Activated T-helper 1 cell treated with anti-CD3 and anti-CD28 coated beads, Interleukin-12 subunit alpha, Interleukin-12 subunit beta, Interleukin-2, Interleukin-4 antibody, amounts not matched to agents 30 ng/mL and 10 ng/mL and 1 ng/mL, durations not matched to agents 14 hours and 24 hours and 36 hours (primary cell): ENCODE measurements at regions of chr22 and their contacts with region 1.

Region 1: GRCh38 chr22:36387752-36388518 is at the start of gene MYH9:
- DNase-seq: peak; percentile 100
- H3K4me3 Mint-ChIP-seq: peak within 1 kb of the TSS; percentile 100
- H3K27ac Mint-ChIP-seq: peak within 1 kb of the TSS; percentile 99
- H3K4me1 Mint-ChIP-seq: peaks cover 44% of the 10 kb centered on the region
- H3K27me3 Mint-ChIP-seq: no peaks in the 10 kb centered on the region
- total RNA-seq, gene MYH9: 618 and 639 TPM in 2 replicates

Region 2: GRCh38 chr22:36239401-36240171 is 148.3 kb before region 1 on chr22 and contains the start of gene APOL2:
- intact Hi-C with region 1: loop called (anchors 5 kb)
- DNase-seq: peak; percentile 84
- H3K4me3 Mint-ChIP-seq: peak within 1 kb of the TSS; percentile 99
- H3K27ac Mint-ChIP-seq: peak within 1 kb of the TSS; percentile 97
- H3K4me1 Mint-ChIP-seq: peaks cover 54% of the 10 kb centered on the region
- H3K27me3 Mint-ChIP-seq: no peaks in the 10 kb centered on the region
- total RNA-seq, gene APOL2: 54.4 and 62.2 TPM in 2 replicates

Region 3: DNA sequence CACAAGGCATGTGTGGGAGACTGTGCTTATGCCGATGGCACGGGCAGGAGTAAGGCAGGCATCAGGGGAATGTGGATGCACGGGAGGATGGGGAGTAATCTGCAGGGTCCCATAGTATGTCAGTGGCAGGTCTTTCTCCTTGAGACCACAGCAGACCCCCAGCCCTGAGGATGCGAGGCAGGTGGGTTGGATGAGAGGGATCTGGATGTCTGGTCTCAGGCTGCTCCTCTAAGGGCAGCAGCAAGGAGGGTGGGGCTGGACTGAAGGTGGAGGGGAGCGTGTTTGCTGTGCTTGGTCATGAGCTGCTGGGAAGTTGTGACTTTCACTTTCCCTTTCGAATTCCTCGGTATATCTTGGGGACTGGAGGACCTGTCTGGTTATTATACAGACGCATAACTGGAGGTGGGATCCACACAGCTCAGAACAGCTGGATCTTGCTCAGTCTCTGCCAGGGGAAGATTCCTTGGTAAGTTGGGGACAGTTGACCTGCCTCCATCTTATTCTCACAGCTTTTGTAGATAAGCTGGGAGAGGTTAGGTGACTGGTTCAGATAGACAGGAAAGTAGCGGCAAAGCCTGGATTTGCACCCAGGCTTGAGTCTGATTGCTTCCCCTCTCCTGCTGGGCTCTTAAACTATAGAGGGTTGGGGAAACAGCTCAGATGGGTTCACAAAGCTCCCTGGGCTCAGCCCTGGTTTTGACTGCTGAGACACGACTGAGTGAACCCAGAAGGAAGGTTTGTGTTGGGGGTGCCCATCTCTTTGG is 135.0 kb before region 1 on chr22 and contains the start of gene APOL1:
- intact Hi-C with region 1: no loop called
- DNase-seq: peak; percentile 64
- H3K4me3 Mint-ChIP-seq: peak within 1 kb of the TSS; percentile 93
- H3K27ac Mint-ChIP-seq: peak within 1 kb of the TSS; percentile 83
- H3K4me1 Mint-ChIP-seq: peaks cover 60% of the 10 kb centered on the region
- H3K27me3 Mint-ChIP-seq: no peaks in the 10 kb centered on the region
- total RNA-seq, gene APOL1: 36.7 and 37.1 TPM in 2 replicates

Region 4: GRCh38 chr22:36331306-36331911 is 56.5 kb before region 1 on chr22:
- intact Hi-C with region 1: loop called (anchors 1 kb)
- DNase-seq: peak; percentile 77
- H3K4me3 Mint-ChIP-seq: peak overlapping the region; percentile 86
- H3K27ac Mint-ChIP-seq: peak overlapping the region; percentile 98
- H3K4me1 Mint-ChIP-seq: peaks cover 99% of the 10 kb centered on the region
- H3K27me3 Mint-ChIP-seq: no peaks in the 10 kb centered on the region

Region 5: DNA sequence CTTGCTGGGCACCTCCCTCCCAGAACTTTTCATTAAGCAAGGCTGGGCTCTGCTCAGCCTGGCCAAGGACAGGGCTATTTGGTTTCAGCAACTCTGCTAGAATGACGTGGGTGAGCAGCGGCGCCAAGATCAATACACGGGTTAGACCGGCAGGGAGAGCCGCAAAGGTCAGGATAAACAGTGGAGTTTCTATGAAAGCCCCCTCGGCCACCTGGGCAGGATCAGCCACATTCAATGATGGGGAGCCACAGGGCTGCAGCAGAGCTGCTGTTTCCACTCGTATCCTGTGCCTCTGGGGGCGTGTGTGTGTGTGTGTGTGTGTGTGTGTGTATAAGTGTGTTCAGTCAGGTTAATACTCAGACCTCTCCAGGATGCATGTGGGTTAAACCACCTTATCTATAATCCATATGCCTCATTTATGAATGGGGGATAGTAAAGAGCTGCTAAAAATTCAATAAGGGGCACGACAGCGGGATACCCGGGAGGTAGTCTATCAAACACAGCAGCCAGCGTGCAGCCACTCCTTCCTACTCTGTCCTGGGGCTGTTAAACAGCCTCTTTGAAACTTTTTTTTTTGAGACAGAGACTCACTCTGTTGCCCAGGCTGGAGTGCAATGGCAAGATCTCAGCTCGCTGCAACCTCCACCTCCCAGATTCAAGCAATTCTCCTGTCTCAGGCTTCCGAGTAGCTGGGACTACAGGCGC is 35.0 kb before region 1 on chr22:
- intact Hi-C with region 1: loop called (anchors 1 kb)
- DNase-seq: no peak
- H3K4me3 Mint-ChIP-seq: no peak overlapping the region
- H3K27ac Mint-ChIP-seq: peak overlapping the region; percentile 86
- H3K4me1 Mint-ChIP-seq: peaks cover 85% of the 10 kb centered on the region
- H3K27me3 Mint-ChIP-seq: no peaks in the 10 kb centered on the region

Region 6: DNA sequence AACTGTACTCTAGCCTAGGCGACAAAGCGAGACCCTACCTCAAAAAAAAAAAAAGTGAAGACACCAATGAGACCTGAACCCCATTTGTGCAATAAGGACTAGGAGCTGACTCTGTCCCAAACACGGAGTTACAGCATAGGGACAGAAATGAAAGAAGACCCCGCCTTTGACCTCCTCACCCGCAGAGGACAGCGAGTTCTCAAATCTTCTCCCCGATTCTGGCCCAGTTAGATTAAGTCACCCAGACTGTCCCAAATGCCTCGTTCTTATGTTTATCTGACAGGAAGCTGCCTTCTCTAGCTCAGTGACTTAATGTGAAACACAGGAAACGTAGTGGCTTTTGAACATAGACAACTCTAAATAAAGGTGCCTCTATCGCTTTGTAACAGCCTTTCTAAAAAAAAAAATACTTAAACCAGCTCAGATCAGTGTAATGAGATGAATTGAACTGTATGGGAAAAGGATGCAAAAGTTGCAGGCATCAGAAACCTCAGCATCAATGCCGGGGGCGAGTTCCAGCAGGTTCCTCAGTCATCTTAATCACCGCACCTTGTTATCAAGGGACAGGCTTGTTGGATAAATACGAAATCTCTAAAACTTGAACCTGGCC is 10.8 kb before region 1 on chr22:
- intact Hi-C with region 1: loop called (anchors 1 kb)
- DNase-seq: peak; percentile 52
- H3K4me3 Mint-ChIP-seq: peak overlapping the region; percentile 87
- H3K27ac Mint-ChIP-seq: peak overlapping the region; percentile 99
- H3K4me1 Mint-ChIP-seq: peaks cover 91% of the 10 kb centered on the region
- H3K27me3 Mint-ChIP-seq: no peaks in the 10 kb centered on the region

Region 7: GRCh38 chr22:36439481-36440271 is 51.7 kb after region 1 on chr22:
- intact Hi-C with region 1: loop called (anchors 5 kb)
- DNase-seq: no peak
- H3K4me3 Mint-ChIP-seq: no peak overlapping the region
- H3K27ac Mint-ChIP-seq: no peak overlapping the region
- H3K4me1 Mint-ChIP-seq: peaks cover 44% of the 10 kb centered on the region
- H3K27me3 Mint-ChIP-seq: no peaks in the 10 kb centered on the region

Region 8: GRCh38 chr22:36481393-36482168 is 93.6 kb after region 1 on chr22 and contains the start of gene TXN2:
- intact Hi-C with region 1: loop called (anchors 1 kb)
- DNase-seq: peak; percentile 91
- H3K4me3 Mint-ChIP-seq: peak within 1 kb of the TSS; percentile 97
- H3K27ac Mint-ChIP-seq: peak within 1 kb of the TSS; percentile 92
- H3K4me1 Mint-ChIP-seq: peaks cover 12% of the 10 kb centered on the region
- H3K27me3 Mint-ChIP-seq: peaks cover 1% of the 10 kb centered on the region
- total RNA-seq, gene TXN2: 95.2 and 95.3 TPM in 2 replicates

Region 9: DNA sequence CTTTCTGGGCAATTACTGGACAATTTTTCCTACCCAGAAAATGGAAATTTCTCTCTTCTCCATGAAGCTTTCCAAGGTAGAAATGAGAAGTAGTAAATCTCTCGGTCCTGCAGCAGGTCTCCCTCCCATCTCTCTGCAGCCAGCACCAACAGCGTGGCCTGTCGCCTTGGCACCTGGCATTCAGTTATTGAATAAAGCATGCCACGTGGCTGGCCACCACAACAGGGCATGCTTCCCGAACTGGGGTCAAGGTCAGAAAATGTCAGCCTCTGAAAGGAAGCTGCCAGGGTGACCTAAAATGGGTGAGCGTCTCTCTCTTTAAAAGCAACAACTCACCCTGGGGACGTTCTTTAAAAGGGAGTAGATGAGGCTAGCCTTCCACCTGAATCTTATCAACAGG is 301.6 kb after region 1 on chr22:
- intact Hi-C with region 1: no loop called
- DNase-seq: no peak
- H3K4me3 Mint-ChIP-seq: no peak overlapping the region
- H3K27ac Mint-ChIP-seq: no peak overlapping the region
- H3K4me1 Mint-ChIP-seq: no peaks in the 10 kb centered on the region
- H3K27me3 Mint-ChIP-seq: no peaks in the 10 kb centered on the region